GM10248 (cell line): ENCODE measurements at regions of chr15 and their contacts with region 1.

Region 1: DNA sequence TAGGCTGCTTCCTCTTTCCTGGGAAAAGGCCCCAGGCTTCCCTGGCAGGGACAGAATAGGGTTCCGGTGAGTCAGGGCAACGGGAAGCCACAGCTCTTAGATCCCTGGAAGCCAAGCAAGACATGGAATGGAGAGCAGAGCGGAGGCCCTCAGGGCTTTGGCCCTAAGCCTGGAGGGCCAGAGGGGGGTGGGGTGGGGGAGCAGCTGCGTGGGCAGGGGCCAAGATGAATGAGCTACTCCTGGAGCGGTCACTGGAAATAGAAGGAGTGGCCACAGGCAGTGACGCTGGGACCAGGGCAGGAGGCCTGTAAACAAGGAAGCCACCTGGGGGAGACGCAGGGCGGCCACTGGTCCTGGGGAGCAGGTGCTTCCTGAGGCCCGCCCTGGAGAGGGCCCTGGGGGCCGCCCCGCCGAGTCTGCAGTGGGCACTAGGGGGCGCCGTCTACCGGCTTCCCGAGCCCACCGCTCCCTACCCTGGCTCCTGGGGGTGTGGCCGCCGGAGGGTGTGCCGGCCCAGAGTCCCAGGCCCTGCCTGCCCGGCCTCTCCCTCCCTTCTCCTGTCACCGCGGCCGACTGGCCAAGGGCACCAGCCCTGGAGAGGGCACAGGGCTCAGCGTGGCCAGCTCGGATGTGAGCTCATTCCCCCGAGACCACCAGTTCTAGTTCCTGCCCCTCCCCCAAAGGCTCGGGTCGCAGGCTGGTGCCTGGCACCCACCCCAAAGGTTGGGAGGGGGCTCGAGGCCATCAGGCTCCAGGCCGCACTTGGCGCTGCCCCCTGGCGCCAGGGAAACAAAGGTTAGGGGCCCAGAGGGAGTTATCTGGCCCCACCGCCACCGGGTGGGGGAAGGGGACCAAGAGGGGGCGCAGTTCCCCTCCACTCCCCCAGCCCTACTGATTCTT is 12.1 kb downstream of the VPS18 start:
- DNase-seq: peak; percentile 87
- CTCF ChIP-seq: peak; percentile 80

Region 2: DNA sequence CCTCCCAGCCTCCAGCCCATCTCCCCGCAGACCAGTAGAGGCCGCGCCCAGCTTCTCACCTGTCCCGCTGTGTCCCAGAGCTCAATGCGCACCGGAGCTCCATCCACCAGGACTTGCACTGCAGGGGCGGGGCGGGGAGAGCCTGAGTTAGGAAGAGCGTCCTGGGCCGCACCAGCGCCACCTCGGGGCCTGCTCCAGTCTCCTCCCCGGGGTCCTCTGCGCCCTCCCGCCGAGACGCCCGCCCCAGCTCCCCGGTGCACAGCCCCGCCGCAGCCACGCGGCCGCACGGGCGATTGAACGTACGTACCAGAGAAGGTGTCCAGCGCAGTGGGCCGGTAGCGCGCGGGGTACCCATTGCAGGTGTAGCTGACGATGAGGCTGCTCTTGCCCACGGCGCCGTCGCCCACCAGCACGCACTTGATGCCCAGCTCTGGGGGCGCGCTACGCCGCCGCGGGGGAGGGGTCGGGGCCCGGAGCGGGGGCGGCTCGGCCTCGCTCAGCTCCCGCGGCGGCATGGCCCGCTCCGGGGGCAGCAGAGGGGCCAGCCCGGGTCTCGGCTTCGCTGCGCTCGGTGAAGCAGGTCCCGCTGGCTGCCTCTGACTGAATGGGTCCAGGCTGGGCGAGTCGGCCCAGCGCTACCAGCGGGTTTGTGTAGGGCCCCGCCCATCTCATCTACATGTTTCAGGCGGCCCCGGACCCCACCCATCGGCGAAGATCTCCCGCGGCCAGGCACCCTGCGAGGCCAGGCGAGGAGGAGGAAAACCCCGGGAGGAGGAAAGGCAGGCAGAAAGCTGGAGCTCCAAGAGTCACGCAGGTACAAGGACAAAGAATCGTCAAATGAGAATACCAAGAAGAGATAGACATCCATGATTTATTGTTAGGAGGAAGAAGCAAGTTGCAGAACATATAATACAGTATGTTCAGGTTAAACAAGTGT is 32.4 kb before region 1 on chr15 and contains the start of gene RHOV:
- CTCF ChIA-PET with region 1: interaction called, 55 read pairs
- POLR2A ChIA-PET with region 1: no interaction called
- DNase-seq: peak; percentile 84
- CTCF ChIP-seq: peak; percentile 68

Region 3: DNA sequence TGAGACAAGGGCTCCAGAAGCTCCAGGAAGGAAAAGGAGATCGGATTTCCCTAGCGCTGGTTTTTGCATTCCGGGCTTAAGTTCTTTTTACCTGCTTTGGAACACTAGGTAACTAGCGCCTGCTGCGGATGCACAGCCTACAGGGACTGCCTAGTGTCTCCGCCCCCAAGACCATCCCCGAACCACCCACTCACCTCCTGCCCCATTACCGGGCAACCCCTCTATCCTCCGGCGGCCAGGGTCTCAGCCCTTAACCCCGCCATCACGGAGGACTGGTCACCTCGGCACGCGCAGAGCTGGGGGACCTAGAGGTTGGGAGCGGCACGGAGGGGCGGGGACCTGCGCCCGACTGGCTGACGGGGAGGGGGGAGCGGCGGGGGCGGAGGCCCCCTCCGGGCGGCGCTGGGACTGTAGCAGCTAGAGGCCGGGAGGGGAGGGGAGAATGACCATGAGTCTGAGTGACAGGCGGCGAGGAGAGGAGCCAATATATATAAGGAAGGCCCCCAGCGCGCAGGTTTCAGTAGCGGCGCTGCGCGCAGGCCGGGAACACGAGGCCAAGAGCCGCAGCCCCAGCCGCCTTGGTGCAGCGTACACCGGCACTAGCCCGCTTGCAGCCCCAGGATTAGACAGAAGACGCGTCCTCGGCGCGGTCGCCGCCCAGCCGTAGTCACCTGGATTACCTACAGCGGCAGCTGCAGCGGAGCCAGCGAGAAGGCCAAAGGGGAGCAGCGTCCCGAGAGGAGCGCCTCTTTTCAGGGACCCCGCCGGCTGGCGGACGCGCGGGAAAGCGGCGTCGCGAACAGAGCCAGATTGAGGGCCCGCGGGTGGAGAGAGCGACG is 22.7 kb after region 1 on chr15 and contains the start of gene DLL4:
- CTCF ChIA-PET with region 1: interaction called, 131 read pairs
- POLR2A ChIA-PET with region 1: interaction called, 6 read pairs
- DNase-seq: peak; percentile 63
- CTCF ChIP-seq: no peak

Region 4: DNA sequence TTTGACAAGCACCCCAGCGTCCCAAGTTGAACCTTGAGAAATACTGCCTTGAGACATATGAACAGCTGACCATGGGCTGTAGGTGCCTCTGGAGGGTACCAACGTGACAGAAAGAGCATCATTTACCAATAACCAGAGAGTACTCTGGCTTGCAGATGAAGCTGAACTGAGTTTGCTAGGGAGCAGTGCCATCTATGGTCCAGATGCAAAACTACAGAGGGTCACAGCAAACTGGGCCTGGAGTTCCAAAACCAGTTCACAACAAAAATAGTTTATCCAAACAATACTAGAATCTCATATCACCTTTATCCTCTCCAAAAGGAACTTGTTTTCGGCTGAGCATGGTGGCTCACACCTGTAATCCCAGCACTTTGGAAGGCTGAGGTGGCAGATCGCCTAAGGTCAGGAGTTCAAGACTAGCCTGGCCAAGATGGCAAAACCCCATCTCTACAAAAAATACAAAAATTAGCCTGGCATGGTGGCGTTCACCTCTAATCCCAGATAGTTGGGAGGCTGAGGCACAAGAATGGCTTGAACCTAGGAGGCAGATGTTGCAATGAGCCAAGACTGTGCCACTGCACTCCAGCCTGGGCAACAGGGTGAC is 116.2 kb after region 1 on chr15:
- CTCF ChIA-PET with region 1: interaction called, 215 read pairs
- POLR2A ChIA-PET with region 1: no interaction called
- DNase-seq: peak; percentile 37
- CTCF ChIP-seq: peak; percentile 65

Region 5: DNA sequence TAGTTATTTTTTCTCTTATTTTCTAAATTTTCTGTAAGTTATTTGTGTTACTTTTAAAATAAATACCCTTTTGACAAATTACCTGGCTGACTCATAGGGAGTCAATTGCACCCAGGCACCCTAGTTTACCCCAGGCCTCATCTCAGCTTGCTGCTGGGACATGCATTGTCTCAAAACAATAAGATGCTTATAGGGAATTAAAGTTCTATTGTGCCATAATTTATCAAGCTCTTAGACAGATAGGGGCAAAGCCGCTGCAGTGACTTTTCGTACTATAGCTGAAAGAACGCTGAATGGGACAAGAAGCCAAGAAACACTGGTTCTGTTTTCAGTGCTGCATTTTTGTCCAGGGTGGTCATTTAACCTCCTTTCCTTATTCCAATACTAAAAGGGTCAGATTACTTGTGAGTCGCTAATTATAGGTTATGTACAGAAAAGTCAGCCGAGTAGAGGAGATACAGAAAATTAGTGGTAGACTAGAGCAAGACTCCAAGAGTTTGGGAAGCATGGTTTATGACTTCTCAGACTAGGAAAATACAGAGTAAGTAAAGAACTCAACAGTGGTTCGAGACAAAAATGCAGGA is 274.0 kb after region 1 on chr15:
- CTCF ChIA-PET with region 1: interaction called, 155 read pairs
- POLR2A ChIA-PET with region 1: no interaction called
- DNase-seq: no peak
- CTCF ChIP-seq: no peak